ENCODE measurements at regions of chr6 and their contacts with region 1.

Region 1: GRCh38 chr6:47413752-47414422 is 63.7 kb upstream of the CD2AP start:
- DNase-seq: no peak
- H3K4me3 ChIP-seq: peak overlapping the region; percentile 11 to 47 (median 43)
- H3K27ac ChIP-seq: peak overlapping the region in 2 of 4 donors; percentile 49 to 50
- H3K4me1 ChIP-seq: peaks cover 0 to 6% (median 4%) of the 10 kb centered on the region in 4 donors
- H3K27me3 ChIP-seq: no peaks in the 10 kb centered on the region
- CTCF ChIP-seq: peak; percentile 21 to 90 (median 76)
- EP300 ChIP-seq: no peak
- POLR2A ChIP-seq: no peak

Region 2: GRCh38 chr6:47477497-47478232 is 63.8 kb after region 1 on chr6 and contains the start of gene CD2AP:
- intact Hi-C with region 1: loop called (anchors 2 kb)
- DNase-seq: peak; percentile 93
- H3K4me3 ChIP-seq: peak within 1 kb of the TSS; percentile 79 to 99 (median 82)
- H3K27ac ChIP-seq: peak within 1 kb of the TSS; percentile 93 to 99 (median 94)
- H3K4me1 ChIP-seq: peaks cover 0 to 29% (median 11%) of the 10 kb centered on the region in 4 donors
- H3K27me3 ChIP-seq: no peaks in the 10 kb centered on the region
- CTCF ChIP-seq: peak in 1 of 4 experiments; percentile 4
- EP300 ChIP-seq: no peak
- POLR2A ChIP-seq: peak in 1 of 2 donors; percentile 22
- total RNA-seq, gene CD2AP: 17.7 to 21.8 (median 20.1) TPM

Region 3: DNA sequence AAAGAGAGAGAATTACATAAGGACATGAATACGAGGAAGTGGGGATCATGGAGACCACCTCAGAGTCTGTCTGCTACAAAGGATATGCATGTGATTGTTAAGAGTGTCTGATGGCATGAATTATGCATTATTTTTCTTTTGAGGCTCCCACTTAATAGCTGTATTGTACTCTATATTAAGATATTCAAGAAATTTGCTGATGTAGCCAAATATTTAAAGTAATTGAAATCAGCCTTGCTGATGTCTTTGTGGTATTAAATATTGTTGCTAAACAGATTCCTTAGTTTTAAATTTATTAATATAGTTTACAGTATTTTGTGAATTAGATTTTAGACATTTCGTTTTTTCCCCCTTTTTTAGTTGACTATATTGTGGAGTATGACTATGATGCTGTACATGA is 89.0 kb after region 1 on chr6:
- intact Hi-C with region 1: no loop called
- DNase-seq: no peak
- H3K4me3 ChIP-seq: no peak overlapping the region
- H3K27ac ChIP-seq: no peak overlapping the region
- H3K4me1 ChIP-seq: peaks cover 0 to 16% (median 11%) of the 10 kb centered on the region in 4 donors
- H3K27me3 ChIP-seq: no peaks in the 10 kb centered on the region
- CTCF ChIP-seq: no peak
- EP300 ChIP-seq: no peak
- POLR2A ChIP-seq: no peak

Region 4: DNA sequence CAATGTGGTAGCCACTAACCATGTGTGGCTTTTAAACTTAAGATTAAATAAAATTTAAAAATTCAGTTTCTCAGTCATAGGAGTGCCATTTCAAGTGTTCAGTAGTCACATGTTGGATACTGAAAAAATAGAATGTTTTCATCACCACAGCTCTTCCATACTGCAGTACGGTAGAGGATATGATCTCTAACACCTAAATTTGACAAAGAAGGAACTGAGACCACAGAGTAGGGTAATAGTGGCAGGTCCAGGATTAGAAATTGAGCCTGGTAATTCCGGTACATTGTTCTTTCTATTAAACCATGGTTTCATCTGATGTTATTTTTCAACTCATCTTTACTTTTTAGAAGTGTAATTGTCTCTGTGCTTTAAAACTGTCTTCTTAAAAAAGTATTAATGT is 167.7 kb after region 1 on chr6:
- intact Hi-C with region 1: loop called (anchors 10 kb)
- DNase-seq: no peak
- H3K4me3 ChIP-seq: no peak overlapping the region
- H3K27ac ChIP-seq: no peak overlapping the region
- H3K4me1 ChIP-seq: no peaks in the 10 kb centered on the region
- H3K27me3 ChIP-seq: no peaks in the 10 kb centered on the region
- CTCF ChIP-seq: no peak
- EP300 ChIP-seq: no peak
- POLR2A ChIP-seq: no peak

Region 5: DNA sequence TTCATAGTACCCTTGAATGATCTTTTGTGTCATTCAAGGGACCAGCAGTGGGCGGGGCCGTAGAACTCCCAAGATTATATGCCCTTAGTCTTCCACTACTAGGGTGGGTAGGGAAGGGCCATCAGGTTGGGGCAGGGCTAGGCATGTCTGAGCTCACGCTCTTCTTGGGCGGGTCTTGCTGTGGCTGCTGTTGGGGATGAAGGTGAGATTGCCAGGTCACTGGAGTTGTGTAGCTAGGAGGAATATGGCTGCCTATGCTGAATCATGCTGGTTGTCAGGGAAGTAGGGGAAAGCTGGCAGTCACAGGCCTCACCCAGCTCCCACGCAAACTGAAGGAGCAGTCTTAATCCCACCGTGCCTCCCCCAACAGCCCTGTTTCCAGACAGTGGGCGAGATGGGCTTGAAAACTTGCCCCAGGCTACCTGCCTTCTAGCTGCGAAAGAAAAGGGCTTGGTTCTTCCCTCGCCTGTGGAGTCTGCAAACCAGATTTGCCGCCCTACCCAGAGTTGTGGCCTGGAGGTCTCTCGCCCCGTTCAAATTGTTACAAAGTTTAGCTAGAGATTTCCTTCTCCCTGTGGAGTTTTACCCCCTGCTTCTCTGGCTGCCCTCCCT is 208.1 kb after region 1 on chr6:
- intact Hi-C with region 1: loop called (anchors 10 kb)
- DNase-seq: no peak
- H3K4me3 ChIP-seq: no peak overlapping the region
- H3K27ac ChIP-seq: no peak overlapping the region
- H3K4me1 ChIP-seq: no peaks in the 10 kb centered on the region
- H3K27me3 ChIP-seq: no peaks in the 10 kb centered on the region
- CTCF ChIP-seq: no peak
- EP300 ChIP-seq: no peak
- POLR2A ChIP-seq: no peak

Region 6: GRCh38 chr6:47780510-47781356 is 366.8 kb after region 1 on chr6:
- intact Hi-C with region 1: loop called (anchors 2 kb)
- DNase-seq: no peak
- H3K4me3 ChIP-seq: no peak overlapping the region
- H3K27ac ChIP-seq: no peak overlapping the region
- H3K4me1 ChIP-seq: peaks cover 0 to 4% (median 2%) of the 10 kb centered on the region in 4 donors
- H3K27me3 ChIP-seq: no peaks in the 10 kb centered on the region
- CTCF ChIP-seq: peak in 3 of 4 experiments; percentile 48 to 60 (median 50)
- EP300 ChIP-seq: no peak
- POLR2A ChIP-seq: no peak